IMR-90 (cell line): ENCODE measurements at regions of chr12 and their contacts with region 1.

Region 1: DNA sequence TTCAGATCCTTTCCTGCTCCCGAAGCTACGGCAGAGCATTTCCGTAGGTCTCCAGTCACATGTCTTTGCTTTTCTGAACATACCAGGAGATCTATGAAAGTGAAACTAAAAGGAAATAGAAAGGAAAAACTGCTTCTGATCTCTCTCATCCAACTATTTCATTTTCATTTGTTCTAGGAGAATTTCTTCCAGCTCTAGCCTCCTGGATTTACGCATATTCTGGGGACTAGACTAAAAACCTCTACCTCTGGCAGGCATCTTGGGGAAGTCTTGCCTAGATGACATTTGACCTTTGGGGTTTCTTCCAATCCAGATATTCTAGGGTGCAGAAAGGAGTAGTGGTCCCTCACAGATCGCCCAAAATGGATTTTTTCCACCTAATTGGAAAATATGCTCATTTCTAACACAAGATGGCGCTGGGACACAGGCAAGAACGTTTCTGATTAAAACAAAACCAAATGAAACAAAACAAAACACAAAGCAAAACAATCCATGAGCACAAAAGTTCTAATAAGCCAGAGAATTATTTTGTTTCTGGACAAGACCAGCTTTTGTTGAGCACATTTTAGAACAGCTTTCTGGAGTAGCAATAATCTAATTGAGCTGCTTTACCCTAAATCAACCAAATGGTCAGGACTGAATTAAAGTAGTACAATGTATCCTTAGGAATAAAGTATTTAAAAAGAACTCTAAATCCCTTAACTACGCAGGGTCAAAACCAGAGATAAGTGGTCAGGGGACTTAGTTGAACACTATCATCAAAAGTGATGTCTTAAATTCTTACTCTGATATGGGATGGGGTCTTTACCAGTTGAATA is 12.3 kb upstream of the PARP11 start:
- DNase-seq: peak; percentile 48
- ATAC-seq: peak; percentile 82
- H3K4me3 ChIP-seq: peak overlapping the region; percentile 55
- H3K27ac ChIP-seq: peak overlapping the region; percentile 69
- H3K4me1 ChIP-seq: peaks cover 1% of the 10 kb centered on the region; the same call in 1 of the 2 replicates
- H3K27me3 ChIP-seq: peaks cover 18% of the 10 kb centered on the region
- CTCF ChIP-seq: peak; percentile 88
- POLR2A ChIP-seq: no peak
- RAD21 ChIP-seq: peak; percentile 83

Region 2: DNA sequence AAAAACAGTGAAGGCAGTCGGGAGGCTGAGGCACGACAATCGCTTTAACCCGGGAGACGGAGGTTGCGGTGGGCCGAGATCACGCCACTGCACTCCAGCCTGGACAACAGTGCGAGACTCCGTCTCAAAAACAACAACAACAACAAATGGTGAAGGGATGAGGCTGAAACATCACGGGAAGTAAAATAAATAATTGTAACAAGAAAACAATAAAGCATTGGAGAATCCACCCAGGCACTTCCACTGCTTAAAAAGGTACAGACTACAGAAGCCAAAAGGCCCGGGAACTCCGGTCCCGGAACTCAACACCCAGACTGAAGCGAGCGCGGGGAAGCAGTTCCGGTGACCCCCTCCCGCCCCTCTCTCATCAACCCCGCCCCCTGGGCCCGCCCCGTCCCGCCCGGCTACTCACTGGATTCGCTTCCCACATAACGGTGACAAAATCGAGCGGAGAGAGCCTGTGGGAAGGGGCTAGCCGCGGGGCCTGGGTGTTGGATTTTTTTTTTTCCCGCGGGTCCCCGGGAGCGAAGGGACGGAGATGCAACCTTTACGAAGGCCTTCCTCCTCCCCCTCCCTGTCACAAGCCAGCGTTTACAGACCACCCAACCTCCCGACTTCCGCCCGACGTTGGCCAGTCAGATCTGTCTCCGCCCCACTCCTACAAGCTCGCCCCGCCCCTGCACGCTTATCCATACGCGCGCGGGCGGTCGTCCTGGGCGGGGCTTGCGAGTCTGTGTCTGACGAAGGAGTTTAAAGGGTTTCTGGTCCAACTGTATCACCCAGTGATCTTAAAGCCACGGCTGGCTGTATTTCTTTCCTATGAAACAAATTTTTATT is 12.5 kb before region 1 on chr12 and contains the start of gene PARP11:
- CTCF ChIA-PET with region 1: interaction called, 10 read pairs
- POLR2A ChIA-PET with region 1: interaction called, 4 read pairs
- dilution Hi-C with region 1: no loop called
- in situ Hi-C with region 1: no loop called
- intact Hi-C with region 1: no loop called
- DNase-seq: peak; percentile 95
- ATAC-seq: peak; percentile 100
- H3K4me3 ChIP-seq: peak within 1 kb of the TSS; percentile 82
- H3K27ac ChIP-seq: peak within 1 kb of the TSS; percentile 97
- H3K4me1 ChIP-seq: no peaks in the 10 kb centered on the region
- H3K27me3 ChIP-seq: no peaks in the 10 kb centered on the region
- CTCF ChIP-seq: no peak
- POLR2A ChIP-seq: peak; percentile 74
- RAD21 ChIP-seq: no peak
- total RNA-seq, gene PARP11: 1.7 and 1.8 TPM in 2 replicates

Region 3: DNA sequence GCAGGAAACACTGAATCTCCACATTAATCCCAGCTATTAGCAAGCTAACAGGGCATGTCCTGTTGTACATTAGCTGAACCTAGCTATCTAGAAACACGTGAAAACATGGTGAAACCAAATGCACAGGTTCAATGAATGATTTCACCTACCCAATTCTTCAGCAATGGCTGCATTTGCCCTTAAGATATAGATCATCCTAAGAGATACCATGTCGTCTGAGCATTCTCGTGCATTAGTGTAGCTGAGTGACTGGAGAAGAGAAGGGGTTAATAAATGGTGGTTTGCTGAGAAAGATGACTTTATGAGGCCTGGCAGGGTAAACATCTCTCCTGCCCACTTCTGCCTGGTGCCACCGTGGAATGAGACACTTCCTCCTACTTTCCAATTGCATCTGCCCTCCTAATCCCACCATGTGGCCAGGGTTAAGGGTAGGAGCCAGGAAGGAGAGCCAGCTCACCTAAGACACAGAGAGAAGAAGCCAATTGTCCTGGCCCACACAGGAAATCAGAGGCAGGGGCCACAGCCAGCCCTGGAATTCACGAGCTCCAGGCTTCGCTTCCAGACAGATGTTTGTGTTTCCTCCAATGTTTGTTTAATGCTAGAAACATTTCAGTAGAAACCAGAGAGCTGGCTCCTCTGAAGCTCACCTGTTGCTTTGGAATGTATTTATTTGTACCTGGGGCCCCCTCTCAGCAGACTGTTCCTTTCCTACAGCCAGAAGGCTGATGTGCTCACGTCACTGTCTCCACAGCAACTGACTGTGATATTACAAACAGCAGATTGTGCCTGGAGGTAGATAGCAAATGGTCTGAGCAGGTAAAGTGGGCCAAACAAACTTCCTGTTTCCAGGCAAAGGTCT is 113.7 kb after region 1 on chr12:
- CTCF ChIA-PET with region 1: no interaction called
- POLR2A ChIA-PET with region 1: no interaction called
- dilution Hi-C with region 1: no loop called
- in situ Hi-C with region 1: no loop called
- intact Hi-C with region 1: loop called (anchors 2 kb)
- DNase-seq: no peak
- ATAC-seq: no peak
- H3K4me3 ChIP-seq: no peak overlapping the region
- H3K27ac ChIP-seq: no peak overlapping the region
- H3K4me1 ChIP-seq: no peaks in the 10 kb centered on the region
- H3K27me3 ChIP-seq: peaks cover 9% of the 10 kb centered on the region
- CTCF ChIP-seq: no peak
- POLR2A ChIP-seq: no peak
- RAD21 ChIP-seq: no peak

Region 4: DNA sequence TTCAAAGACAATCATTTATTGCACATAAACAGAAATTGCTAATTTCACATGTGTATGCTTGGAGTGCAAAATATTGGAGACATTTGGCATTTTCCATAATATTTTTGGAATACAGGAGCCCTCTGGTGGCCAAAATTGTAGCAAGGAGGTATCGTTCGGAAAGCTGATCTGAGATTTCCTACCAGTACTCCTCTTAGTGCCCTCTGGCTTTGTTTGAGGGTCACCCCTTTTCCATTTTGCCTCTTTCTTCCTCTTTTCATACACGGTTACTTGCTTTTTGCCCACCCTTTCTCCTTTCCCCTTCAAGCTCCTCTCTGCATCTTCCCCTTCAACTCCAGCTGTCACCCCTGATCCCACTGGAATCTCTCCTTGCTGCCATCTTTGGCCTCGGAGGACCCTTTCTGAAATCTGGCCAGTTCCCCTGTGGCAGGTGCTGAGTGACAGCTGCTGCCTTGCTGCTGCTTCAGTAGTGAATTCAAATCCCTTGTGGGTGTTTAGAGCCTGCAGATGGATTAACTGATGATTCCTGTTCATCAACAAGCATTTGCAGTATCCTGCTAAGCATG is 152.3 kb after region 1 on chr12:
- CTCF ChIA-PET with region 1: interaction called, 10 read pairs
- POLR2A ChIA-PET with region 1: interaction called, 12 read pairs
- dilution Hi-C with region 1: no loop called
- in situ Hi-C with region 1: loop called (anchors 5 kb)
- intact Hi-C with region 1: loop called (anchors 1 kb)
- DNase-seq: peak; percentile 44
- ATAC-seq: peak; percentile 59
- H3K4me3 ChIP-seq: no peak overlapping the region
- H3K27ac ChIP-seq: no peak overlapping the region
- H3K4me1 ChIP-seq: peaks cover 2% of the 10 kb centered on the region; the same call in 1 of the 2 replicates
- H3K27me3 ChIP-seq: peaks cover 27% of the 10 kb centered on the region
- CTCF ChIP-seq: peak; percentile 79
- POLR2A ChIP-seq: no peak
- RAD21 ChIP-seq: peak; percentile 63

Region 5: DNA sequence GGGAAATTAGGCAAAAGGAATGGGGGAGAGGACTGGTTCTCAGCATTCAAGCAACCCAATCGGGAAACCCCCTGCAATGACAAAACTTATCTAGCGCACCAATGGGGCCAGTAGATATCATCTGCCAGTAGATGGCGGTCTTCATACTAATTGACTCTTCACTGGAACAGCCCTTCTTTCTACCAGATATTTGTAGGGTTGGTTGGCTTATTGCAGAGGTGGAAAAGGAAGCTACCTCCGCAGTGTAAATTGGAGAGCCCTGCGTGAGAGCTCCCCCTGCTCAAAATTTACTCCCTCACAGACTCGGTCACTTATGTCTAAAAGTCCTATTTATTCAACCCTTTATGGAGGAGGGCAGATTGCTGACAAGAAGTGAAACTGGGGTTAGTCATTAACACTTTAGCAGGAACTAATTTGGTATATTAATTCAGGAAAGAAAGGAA is 222.0 kb after region 1 on chr12:
- CTCF ChIA-PET with region 1: no interaction called
- POLR2A ChIA-PET with region 1: no interaction called
- dilution Hi-C with region 1: no loop called
- in situ Hi-C with region 1: no loop called
- intact Hi-C with region 1: loop called (anchors 1 kb)
- DNase-seq: peak; percentile 53
- ATAC-seq: peak; percentile 92
- H3K4me3 ChIP-seq: no peak overlapping the region
- H3K27ac ChIP-seq: no peak overlapping the region
- H3K4me1 ChIP-seq: no peaks in the 10 kb centered on the region
- H3K27me3 ChIP-seq: peaks cover 3% of the 10 kb centered on the region
- CTCF ChIP-seq: peak; percentile 67
- POLR2A ChIP-seq: no peak
- RAD21 ChIP-seq: peak; percentile 54

Region 6: GRCh38 chr12:4276524-4277204 is 391.2 kb after region 1 on chr12:
- CTCF ChIA-PET with region 1: interaction called, 32 read pairs
- POLR2A ChIA-PET with region 1: no interaction called
- dilution Hi-C with region 1: no loop called
- in situ Hi-C with region 1: loop called (anchors 5 kb)
- intact Hi-C with region 1: loop called (anchors 1 kb)
- DNase-seq: peak; percentile 82
- ATAC-seq: peak; percentile 77
- H3K4me3 ChIP-seq: no peak overlapping the region
- H3K27ac ChIP-seq: no peak overlapping the region
- H3K4me1 ChIP-seq: peaks cover 3% of the 10 kb centered on the region; the same call in 1 of the 2 replicates
- H3K27me3 ChIP-seq: peaks cover 47% of the 10 kb centered on the region
- CTCF ChIP-seq: peak; percentile 97
- POLR2A ChIP-seq: no peak
- RAD21 ChIP-seq: peak; percentile 95

Region 7: GRCh38 chr12:4526923-4527546 is 641.5 kb after region 1 on chr12:
- CTCF ChIA-PET with region 1: no interaction called
- POLR2A ChIA-PET with region 1: no interaction called
- dilution Hi-C with region 1: no loop called
- in situ Hi-C with region 1: no loop called
- intact Hi-C with region 1: loop called (anchors 10 kb)
- DNase-seq: peak; percentile 16
- ATAC-seq: no peak
- H3K4me3 ChIP-seq: no peak overlapping the region
- H3K27ac ChIP-seq: no peak overlapping the region
- H3K4me1 ChIP-seq: no peaks in the 10 kb centered on the region
- H3K27me3 ChIP-seq: no peaks in the 10 kb centered on the region
- CTCF ChIP-seq: peak; percentile 52
- POLR2A ChIP-seq: no peak
- RAD21 ChIP-seq: peak; percentile 36